Body of pancreas (tissue), 4 donors: ENCODE measurements at regions of chr15 and their contacts with region 1.

Region 1: GRCh38 chr15:74842581-74843444 is at the start of gene ULK3:
- DNase-seq: peak; percentile 89 to 94 (median 92)
- ATAC-seq: peak; percentile 94
- H3K4me3 ChIP-seq: peak within 1 kb of the TSS; percentile 29 to 70
- H3K27ac ChIP-seq: peak within 1 kb of the TSS; percentile 78 to 88 (median 82)
- H3K4me1 ChIP-seq: peaks cover 21% of the 10 kb centered on the region
- H3K27me3 ChIP-seq: no peaks in the 10 kb centered on the region
- CTCF ChIP-seq: peak; percentile 55 to 96 (median 83)
- POLR2A ChIP-seq: peak; percentile 61 to 76 (median 75)
- total RNA-seq, gene ULK3: 74.2 to 76.3 TPM

Region 2: DNA sequence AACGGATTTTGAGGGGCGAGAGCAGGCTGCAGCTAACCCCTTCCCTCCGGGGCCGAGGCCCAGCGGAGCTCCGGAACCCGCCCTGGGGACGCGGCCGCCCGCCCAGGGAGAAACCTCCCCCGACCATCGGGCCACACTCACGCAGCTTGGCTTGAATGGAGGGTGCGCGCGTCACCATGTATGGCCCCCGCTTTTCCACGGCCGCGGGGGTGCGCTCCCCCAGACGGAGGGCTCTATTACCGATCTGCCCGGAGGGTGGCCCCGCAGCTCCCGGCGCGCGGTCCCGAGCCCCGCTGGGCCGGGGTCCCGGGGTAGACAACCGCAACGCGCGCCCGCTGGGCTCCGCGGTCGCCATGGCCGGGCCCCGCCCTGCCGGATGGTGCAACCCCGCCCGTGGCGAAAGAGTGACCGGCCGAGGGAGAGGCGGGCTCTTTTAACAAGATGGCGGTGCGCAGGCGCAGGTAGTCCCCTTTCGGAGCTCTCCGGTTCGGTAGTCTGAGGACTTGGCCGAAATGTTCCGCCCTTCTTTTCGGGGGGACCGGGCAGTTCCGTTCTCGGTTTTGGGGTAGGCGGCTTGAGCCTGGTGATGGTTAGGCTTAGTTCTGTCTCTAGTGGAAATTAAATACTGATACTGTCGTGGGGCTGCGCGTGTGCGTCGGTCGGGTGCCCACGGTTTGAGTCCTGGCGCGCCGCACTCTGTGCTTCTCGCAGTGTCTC is 63.8 kb after region 1 on chr15 and contains the start of gene FAM219B:
- intact Hi-C with region 1: loop called (anchors 10 kb)
- DNase-seq: peak; percentile 92 to 95 (median 94)
- ATAC-seq: peak; percentile 97
- H3K4me3 ChIP-seq: peak within 1 kb of the TSS; percentile 63 to 79
- H3K27ac ChIP-seq: peak within 1 kb of the TSS; percentile 70 to 87 (median 80)
- H3K4me1 ChIP-seq: peaks cover 27% of the 10 kb centered on the region
- H3K27me3 ChIP-seq: no peaks in the 10 kb centered on the region
- CTCF ChIP-seq: no peak
- POLR2A ChIP-seq: peak; percentile 42 to 71 (median 63)
- total RNA-seq, gene FAM219B: 25.4 to 42.8 TPM

Region 3: DNA sequence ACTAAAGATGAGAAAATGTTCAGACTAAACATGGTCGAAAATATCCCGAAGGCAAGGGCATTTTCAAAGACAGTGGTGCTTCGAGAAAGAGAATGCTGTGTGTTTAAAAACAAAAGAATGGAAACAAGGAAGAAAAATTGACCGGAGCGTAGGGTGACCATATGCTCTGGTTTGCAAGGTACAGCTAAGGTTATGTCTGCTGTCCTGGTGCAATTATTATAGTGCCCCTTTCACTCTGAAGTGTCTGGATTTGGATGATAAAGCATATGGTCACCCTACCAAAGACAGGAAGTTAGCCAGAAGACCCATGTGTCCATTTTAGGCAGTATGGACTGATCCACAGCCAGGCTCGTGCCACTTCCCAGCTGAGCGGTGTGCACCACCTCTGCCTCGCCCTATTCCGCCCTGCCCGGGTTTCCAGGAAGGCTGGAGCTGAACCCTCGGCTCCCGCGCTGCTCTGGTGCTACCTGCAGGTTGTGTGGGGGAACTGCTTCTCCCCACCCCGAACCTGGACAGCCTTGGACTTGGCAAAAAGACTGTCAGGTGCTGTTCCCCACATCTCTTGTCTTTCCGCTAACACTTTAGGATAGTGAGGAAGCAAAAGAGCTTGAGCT is 465.1 kb after region 1 on chr15:
- intact Hi-C with region 1: no loop called
- DNase-seq: peak; percentile 64 to 82 (median 72)
- ATAC-seq: peak; percentile 92
- H3K4me3 ChIP-seq: no peak overlapping the region
- H3K27ac ChIP-seq: no peak overlapping the region
- H3K4me1 ChIP-seq: no peaks in the 10 kb centered on the region
- H3K27me3 ChIP-seq: peaks cover 0 to 4% of the 10 kb centered on the region in 2 donors
- CTCF ChIP-seq: peak; percentile 29 to 84 (median 62)
- POLR2A ChIP-seq: no peak